Astrocyte of the cerebellum (primary cell): ENCODE measurements at regions of chr15 and their contacts with region 1.

Region 1: GRCh38 chr15:71844916-71845315 is 34.6 kb downstream of the NR2E3 start:
- DNase-seq: no peak
- H3K4me3 ChIP-seq: no peak overlapping the region
- CTCF ChIP-seq: no peak

Region 2: DNA sequence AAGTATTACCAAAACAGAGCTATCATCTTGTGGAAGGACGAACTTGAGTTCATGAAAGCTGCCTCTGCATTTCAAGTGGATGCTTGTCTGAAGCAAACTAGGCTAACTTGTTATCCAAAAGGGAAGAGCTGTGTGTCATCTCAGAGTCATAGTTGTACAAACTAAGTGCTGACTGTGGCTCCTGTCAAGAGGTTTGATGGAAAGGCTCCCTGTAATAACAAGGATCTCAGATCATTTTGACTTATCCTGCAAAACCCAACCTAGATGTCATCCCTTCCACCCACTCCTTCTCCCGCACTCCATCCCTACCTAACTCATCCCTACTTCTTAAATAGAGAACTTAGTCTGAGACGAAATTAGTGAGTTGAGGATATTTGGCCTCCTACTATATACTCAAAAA is 76.3 kb after region 1 on chr15:
- in situ Hi-C with region 1: loop called (anchors 5 kb)
- DNase-seq: no peak
- H3K4me3 ChIP-seq: no peak overlapping the region
- CTCF ChIP-seq: no peak

Region 3: DNA sequence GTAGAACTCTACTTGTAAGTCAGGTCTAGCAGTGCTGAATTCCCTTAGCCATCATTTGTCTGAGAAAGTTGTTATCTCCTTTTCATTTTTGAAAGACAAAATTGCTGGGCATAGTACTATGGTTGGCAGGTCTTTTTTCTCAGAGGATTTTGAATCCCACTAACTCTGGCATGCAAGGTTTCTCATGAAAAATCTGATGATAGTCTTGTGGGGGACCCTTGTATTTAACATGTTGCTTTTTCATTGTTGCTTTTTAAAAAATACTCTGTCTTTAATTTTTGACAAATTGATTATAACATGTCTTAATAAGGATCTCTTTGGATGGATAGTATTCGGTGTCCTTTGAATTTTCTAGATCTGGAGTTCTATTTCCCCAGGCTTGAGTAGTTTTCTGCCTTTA is 86.3 kb after region 1 on chr15:
- in situ Hi-C with region 1: no loop called
- DNase-seq: no peak
- H3K4me3 ChIP-seq: no peak overlapping the region
- CTCF ChIP-seq: no peak